ENCODE measurements at regions of chr13 and their contacts with region 1.

Region 1: DNA sequence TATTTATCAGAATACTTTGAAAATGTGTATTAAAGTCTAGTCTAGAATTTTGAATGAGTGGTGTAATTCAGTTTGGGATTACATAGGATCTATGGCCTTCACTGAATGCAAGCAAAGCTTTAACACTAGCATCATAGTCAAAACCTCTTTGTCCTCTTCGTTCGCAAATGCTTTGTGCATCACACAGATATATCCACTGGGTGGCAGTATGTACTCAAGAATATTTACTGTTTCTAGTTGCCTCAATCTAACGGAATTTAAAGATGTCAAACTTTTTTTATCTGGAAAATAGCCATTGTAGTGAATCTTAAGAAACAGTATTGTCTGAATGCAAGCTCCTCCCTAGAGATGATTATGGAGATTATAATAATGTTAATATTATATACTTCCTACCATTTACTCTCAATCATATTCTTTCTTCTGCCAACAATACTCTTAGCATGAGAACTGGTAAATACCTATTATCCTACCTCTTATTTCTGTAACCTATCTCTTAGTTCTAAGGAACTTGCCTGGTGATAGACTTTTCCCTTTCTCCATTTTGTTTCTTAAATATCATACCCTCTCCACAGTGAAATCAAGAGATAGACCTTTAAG is 25.8 kb downstream of the LACC1 start:
- DNase-seq: peak; percentile 48
- H3K4me3 ChIP-seq: no peak overlapping the region
- H3K27ac ChIP-seq: no peak overlapping the region
- H3K27me3 ChIP-seq: no peaks in the 10 kb centered on the region
- CTCF ChIP-seq: peak; percentile 68

Region 2: GRCh38 chr13:43787997-43788396 is 117.5 kb before region 1 on chr13:
- CTCF ChIA-PET with region 1: no interaction called
- POLR2A ChIA-PET with region 1: no interaction called
- DNase-seq: no peak
- H3K4me3 ChIP-seq: no peak overlapping the region
- H3K27ac ChIP-seq: no peak overlapping the region
- H3K27me3 ChIP-seq: no peaks in the 10 kb centered on the region
- CTCF ChIP-seq: peak; percentile 23; the same call in 1 of the 2 replicates

Region 3: DNA sequence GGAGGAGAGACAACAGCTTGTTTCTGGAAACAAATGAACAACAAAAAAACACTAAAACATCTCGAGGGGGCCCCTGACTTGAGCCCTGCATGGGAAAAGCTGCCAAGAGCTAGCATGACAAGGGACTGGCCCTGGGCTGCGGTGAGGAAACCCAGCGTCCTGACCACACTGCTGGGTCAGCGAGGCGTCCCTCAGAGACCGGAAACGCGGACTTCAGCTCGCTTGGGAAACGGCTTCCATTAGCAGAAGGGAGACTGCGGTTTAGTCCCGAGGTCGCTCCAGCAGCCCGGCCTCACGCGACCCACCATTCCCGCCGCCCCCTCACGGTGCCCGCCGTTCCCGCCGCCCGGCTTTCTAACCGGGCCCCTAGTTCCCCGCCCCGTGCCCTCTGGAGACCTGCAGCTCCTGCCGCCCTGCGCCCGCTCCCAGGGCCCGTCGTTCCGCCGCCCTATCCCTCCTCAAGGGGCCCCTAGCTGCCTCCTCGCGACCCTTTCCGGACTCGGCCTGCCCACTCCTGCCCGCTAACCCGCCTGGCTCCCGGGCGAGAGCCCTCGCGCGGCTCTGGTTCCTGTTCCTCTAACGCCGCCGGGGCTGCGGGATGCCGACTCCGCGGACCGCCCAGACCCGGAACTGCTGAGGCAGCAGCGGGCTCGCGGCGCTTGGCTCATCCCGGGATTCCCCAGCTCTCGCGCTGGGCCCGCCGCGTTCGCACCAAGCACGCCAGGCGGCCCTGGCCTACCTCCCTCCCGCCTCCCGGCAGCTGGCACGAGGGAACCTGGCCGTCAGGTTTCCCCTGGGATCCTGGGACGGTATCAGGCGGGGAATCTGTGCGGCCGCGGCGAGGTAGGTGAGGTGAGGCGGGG is 26.4 kb before region 1 on chr13 and contains the start of gene CCDC122:
- CTCF ChIA-PET with region 1: no interaction called
- POLR2A ChIA-PET with region 1: no interaction called
- DNase-seq: peak; percentile 54
- H3K4me3 ChIP-seq: peak within 1 kb of the TSS; percentile 72
- H3K27ac ChIP-seq: peak within 1 kb of the TSS; percentile 86
- H3K27me3 ChIP-seq: no peaks in the 10 kb centered on the region
- CTCF ChIP-seq: no peak
- polyA plus RNA-seq, gene CCDC122: 1.6 and 1.7 TPM in 2 replicates

Region 4: DNA sequence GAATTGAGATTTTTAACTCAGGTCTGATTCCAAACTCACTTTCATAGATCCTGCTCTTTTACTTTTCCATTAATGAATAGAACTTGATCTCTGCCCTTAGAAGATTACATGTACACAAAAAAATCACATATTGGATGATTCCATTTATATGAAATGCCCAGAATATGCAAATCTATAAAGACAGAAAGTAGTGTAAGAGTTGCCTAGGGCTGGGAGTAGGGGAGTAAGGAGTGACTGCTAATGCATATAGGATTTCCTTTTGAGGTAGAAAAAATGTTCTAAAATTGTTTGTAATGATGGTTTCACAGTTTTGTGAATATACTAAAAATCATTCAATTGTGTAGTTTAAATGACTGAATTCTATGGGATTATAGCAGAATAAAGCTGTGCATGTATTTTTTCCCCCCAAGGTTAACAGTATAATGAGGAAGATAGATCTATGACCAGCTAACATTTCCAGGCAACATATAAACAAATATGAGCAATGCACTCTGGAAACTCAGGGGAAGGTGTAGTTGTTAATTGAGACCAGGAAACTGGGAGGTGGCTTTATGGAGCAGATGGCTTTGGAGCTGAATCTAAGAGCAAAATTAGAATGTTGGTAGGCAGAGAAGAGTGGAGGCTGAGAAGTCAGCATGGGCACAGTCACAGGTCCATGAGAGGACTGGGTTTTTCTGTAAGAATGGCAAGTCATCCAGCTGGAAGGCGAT is 15.6 kb after region 1 on chr13:
- CTCF ChIA-PET with region 1: interaction called, 12 read pairs
- POLR2A ChIA-PET with region 1: no interaction called
- DNase-seq: no peak
- H3K4me3 ChIP-seq: no peak overlapping the region
- H3K27ac ChIP-seq: no peak overlapping the region
- H3K27me3 ChIP-seq: no peaks in the 10 kb centered on the region
- CTCF ChIP-seq: no peak

Region 5: GRCh38 chr13:44050450-44051063 is 145.0 kb after region 1 on chr13:
- CTCF ChIA-PET with region 1: interaction called, 99 read pairs
- POLR2A ChIA-PET with region 1: no interaction called
- DNase-seq: no peak
- H3K4me3 ChIP-seq: no peak overlapping the region
- H3K27ac ChIP-seq: no peak overlapping the region
- H3K27me3 ChIP-seq: peaks cover 6% of the 10 kb centered on the region
- CTCF ChIP-seq: peak; percentile 80

Region 6: DNA sequence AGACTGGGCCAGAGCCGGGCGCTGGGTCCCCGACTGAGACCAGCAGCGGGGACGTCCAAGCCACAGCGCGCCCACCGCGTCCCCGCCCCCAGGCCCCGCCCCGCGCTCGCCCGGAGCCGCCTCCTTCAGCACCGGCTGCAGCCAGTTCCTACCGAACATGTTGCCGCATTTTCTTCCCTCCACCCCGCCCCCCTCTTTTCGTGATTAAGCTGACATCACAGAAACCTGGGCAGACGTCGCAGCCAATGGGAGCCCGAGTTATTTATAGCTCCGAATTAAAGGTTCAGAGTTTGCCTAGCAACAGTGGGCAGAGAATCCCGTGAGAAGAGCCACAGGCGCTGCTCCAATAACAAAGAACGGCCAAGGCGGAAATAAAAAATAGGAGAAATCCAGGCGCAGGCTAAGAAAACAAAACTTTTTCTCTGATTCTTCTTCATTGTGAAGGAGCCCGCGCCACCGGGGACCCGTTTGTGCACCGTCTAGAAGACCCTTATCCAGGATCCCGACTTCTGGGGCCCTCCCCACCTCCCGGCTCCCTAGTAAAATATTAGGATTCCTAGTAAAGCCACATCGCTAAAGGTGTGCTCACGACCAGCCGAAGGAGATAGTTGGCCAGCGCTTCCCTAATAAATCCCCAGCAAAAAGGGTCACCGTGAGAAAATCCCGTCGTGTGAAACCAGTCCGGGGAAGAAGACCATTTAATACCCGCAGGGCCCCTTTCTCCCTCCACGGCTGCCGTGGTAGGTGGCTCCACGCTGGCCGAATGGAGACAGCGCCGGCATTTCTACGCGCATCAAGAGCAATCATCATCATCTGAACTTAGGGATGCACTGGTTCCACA is 529.8 kb after region 1 on chr13:
- CTCF ChIA-PET with region 1: interaction called, 123 read pairs
- POLR2A ChIA-PET with region 1: interaction called, 8 read pairs
- DNase-seq: peak; percentile 97
- H3K4me3 ChIP-seq: peak overlapping the region; percentile 79
- H3K27ac ChIP-seq: peak overlapping the region; percentile 89
- H3K27me3 ChIP-seq: no peaks in the 10 kb centered on the region
- CTCF ChIP-seq: no peak

Region 7: GRCh38 chr13:44465318-44465717 is 559.8 kb after region 1 on chr13:
- CTCF ChIA-PET with region 1: interaction called, 58 read pairs
- POLR2A ChIA-PET with region 1: interaction called, 4 read pairs
- DNase-seq: no peak
- H3K4me3 ChIP-seq: no peak overlapping the region
- H3K27ac ChIP-seq: no peak overlapping the region
- H3K27me3 ChIP-seq: no peaks in the 10 kb centered on the region
- CTCF ChIP-seq: no peak

Region 8: DNA sequence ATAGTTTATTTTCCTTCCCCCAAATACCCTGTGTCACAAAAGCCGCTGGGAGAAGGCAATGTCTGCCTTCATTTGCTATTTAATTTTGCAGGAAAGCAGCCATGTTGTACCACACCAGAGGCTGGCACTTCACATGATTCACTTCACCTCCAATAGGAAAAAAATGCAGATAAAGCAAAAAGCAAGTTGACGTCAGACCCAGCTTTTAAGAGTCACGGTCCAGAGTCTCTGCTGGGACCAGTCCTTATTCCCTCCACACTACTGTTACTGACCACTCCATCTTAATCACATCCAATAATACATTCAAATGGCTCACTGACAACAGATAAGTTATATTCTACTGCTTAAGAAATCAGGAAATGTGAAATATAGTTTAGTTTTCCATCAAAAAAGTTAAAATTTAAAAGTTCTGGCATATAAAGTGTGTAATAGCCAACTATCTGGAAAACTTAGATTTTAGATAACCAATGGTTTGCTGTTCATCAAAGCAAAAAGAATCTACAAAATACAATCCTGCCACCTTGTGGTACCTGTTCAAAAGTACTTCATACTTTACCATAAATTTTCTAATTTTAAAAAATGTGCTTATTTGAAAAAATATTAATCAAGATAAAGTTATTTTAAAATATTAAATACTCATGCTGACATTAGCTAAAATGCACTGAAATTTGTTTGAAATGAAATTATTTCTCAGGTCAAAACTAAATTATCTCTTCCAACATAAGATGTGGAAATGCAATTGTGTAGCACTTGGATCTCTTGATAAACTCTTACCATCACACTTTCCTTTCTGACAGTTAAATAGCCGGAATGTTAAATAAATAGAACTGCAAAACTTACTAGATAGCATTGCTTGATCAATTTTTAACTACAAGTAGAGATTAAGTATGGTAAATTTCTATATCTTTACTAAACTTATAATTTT is 565.4 kb after region 1 on chr13:
- CTCF ChIA-PET with region 1: interaction called, 58 read pairs
- POLR2A ChIA-PET with region 1: interaction called, 4 read pairs
- DNase-seq: no peak
- H3K4me3 ChIP-seq: no peak overlapping the region
- H3K27ac ChIP-seq: no peak overlapping the region
- H3K27me3 ChIP-seq: no peaks in the 10 kb centered on the region
- CTCF ChIP-seq: peak; percentile 50